Activated CD8-positive, alpha-beta T cell treated with anti-CD3 and anti-CD28 coated beads for 36 hours (primary cell): ENCODE measurements at regions of chr1 and their contacts with region 1.

Region 1: GRCh38 chr1:179121159-179121938 is 39.5 kb downstream of the TOR3A start:
- DNase-seq: peak; percentile 65
- ATAC-seq: peak; percentile 56
- H3K4me3 Mint-ChIP-seq: no peak overlapping the region
- H3K27ac Mint-ChIP-seq: no peak overlapping the region
- H3K4me1 Mint-ChIP-seq: peaks cover 7% of the 10 kb centered on the region
- H3K27me3 Mint-ChIP-seq: no peaks in the 10 kb centered on the region
- CTCF ChIP-seq: peak; percentile 72

Region 2: DNA sequence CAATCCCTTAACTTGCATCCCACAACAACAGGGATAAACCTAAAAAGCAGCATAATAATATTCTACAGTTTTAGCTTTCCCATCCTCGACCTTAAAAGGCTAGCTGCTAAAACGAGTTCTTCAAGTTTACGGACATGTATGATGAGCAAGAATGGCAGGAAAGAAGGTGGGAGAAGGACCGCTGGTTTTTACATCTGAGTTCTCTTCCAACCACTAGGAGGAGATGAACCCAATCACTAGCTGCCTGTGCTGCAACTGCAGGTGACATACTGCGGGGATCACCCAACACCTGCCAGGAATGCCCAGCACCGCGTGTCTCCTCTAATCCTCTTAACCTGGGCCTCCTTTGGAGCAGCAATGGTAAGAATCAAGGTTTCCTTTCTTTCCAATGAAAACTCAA is 16.0 kb before region 1 on chr1:
- CTCF ChIA-PET with region 1: interaction called, 16 read pairs
- POLR2A ChIA-PET with region 1: interaction called, 4 read pairs
- intact Hi-C with region 1: no loop called
- DNase-seq: peak; percentile 7
- ATAC-seq: no peak
- H3K4me3 Mint-ChIP-seq: no peak overlapping the region
- H3K27ac Mint-ChIP-seq: no peak overlapping the region
- H3K4me1 Mint-ChIP-seq: no peaks in the 10 kb centered on the region
- H3K27me3 Mint-ChIP-seq: no peaks in the 10 kb centered on the region
- CTCF ChIP-seq: no peak

Region 3: DNA sequence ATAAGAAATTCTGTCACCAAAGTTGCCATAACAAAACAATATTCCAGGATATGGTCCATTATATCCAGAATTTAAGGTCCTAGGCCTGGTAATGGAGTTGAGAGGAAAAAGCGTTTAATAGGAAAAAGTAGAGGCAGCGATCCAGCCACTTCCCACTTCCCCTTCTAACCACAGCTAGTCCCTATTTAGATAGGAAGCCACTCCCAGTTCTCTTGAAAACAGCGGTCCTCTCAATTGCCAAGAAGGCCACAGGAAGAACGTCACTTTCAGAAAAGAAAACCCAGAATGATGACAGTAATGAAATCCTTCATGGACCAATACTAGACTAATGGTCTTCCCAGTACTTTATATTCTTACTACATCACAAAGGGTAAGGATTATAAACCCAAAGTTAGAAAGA is 69.5 kb after region 1 on chr1:
- CTCF ChIA-PET with region 1: interaction called, 8 read pairs
- POLR2A ChIA-PET with region 1: no interaction called
- intact Hi-C with region 1: loop called (anchors 5 kb)
- DNase-seq: no peak
- ATAC-seq: no peak
- H3K4me3 Mint-ChIP-seq: no peak overlapping the region
- H3K27ac Mint-ChIP-seq: no peak overlapping the region
- H3K4me1 Mint-ChIP-seq: peaks cover 25% of the 10 kb centered on the region
- H3K27me3 Mint-ChIP-seq: no peaks in the 10 kb centered on the region
- CTCF ChIP-seq: no peak

Region 4: DNA sequence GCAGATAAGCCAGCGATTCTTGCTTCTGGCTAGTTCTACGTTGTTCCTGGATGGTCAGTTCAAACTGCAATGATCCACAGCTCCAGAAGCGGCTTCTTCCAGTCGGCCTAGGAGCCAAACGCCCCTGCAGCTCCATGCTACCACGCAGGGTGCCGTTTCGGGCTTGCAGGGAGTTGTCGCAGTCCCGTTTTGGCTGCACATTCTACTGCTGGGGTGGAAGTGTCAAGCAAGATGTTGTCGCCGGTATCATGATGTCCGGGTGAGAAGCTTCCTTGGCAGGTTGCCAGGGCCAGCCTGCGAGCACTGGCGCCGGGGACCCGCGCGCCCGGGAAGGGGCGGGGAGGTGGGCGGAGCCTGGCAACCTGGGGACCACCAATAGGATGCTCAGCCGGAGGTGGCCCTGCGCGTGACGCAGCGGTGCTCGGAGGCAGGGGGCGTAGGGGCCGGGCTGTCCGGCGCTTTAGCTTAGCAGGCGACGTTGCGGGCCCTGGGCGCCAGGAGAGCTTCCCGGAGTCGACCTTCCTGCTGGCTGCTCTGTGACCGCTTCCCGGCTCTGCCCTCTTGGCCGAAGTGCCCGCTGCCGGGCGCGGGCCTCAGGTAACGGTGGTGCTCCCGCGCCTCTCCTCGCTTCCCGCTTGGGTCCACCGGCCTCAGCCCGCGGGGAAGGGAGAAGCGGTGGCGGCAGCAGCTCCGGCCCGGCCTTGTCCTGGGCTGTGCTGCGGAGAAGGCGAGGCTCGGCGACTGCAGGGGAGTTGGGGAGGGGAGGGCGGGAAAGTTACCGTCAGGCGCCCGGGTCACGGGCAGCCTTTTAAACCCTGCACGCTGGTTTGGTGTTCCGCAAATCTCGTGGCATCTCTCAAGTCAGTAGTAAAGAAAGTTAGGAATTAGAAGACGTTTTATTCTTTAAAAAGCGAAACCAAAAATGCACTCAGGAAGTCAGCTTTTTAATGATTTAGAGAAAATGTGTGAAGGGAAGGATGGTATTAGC is 172.3 kb after region 1 on chr1 and contains the start of gene SOAT1:
- CTCF ChIA-PET with region 1: interaction called, 25 read pairs
- POLR2A ChIA-PET with region 1: interaction called, 5 read pairs
- intact Hi-C with region 1: loop called (anchors 5 kb)
- DNase-seq: peak; percentile 96
- ATAC-seq: peak; percentile 97
- H3K4me3 Mint-ChIP-seq: peak within 1 kb of the TSS; percentile 86
- H3K27ac Mint-ChIP-seq: peak within 1 kb of the TSS; percentile 94
- H3K4me1 Mint-ChIP-seq: peaks cover 37% of the 10 kb centered on the region
- H3K27me3 Mint-ChIP-seq: no peaks in the 10 kb centered on the region
- CTCF ChIP-seq: no peak
- total RNA-seq, gene SOAT1: 58.0 to 58.7 TPM